Naive thymus-derived CD4-positive, alpha-beta T cell (primary cell): ENCODE measurements at regions of chr15 and their contacts with region 1.

Region 1: GRCh38 chr15:101014921-101015841 is 96.0 kb downstream of the LRRK1 start:
- DNase-seq: peak; percentile 19 to 77 (median 48)
- ATAC-seq: peak; percentile 53
- H3K4me3 ChIP-seq: no peak overlapping the region
- H3K4me3 Mint-ChIP-seq: no peak overlapping the region
- H3K27ac ChIP-seq: no peak overlapping the region
- H3K27ac Mint-ChIP-seq: no peak overlapping the region
- H3K4me1 ChIP-seq: no peaks in the 10 kb centered on the region
- H3K4me1 Mint-ChIP-seq: peaks cover 0 to 3% (median 0%) of the 10 kb centered on the region in 7 donors
- H3K27me3 ChIP-seq: no peaks in the 10 kb centered on the region
- H3K27me3 Mint-ChIP-seq: peaks cover 0 to 3% (median 0%) of the 10 kb centered on the region in 5 donors

Region 2: DNA sequence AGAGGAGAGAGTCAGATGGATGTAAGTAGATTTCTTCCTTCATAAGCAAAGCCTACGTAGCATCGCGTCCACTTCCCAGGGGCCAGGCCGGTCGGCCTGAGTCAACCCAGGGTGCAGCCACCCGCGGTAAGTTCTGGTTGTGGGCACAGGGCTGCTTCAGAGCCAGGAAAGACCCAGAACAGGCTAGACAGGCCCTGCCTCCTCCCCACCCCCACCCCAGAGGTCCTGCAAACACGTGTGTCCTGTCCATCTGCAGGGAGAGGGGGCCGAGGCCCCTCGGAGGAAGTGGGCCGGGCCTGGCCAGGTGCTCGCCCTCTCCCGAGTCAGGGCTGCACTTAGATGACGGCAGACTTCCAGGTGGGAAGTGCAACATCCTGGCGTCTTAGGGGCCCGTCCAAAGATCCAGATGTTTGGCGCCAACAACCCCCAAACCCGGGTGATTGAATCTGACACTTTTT is 236.3 kb before region 1 on chr15:
- CTCF ChIA-PET with region 1: no interaction called
- POLR2A ChIA-PET with region 1: no interaction called
- intact Hi-C with region 1: no loop called
- DNase-seq: peak in 1 of 9 donors; percentile 4
- ATAC-seq: no peak
- H3K4me3 ChIP-seq: no peak overlapping the region
- H3K4me3 Mint-ChIP-seq: no peak overlapping the region
- H3K27ac ChIP-seq: no peak overlapping the region
- H3K27ac Mint-ChIP-seq: no peak overlapping the region
- H3K4me1 ChIP-seq: no peaks in the 10 kb centered on the region
- H3K4me1 Mint-ChIP-seq: no peaks in the 10 kb centered on the region
- H3K27me3 ChIP-seq: no peaks in the 10 kb centered on the region
- H3K27me3 Mint-ChIP-seq: peaks cover 3 to 22% (median 13%) of the 10 kb centered on the region in 5 donors

Region 3: DNA sequence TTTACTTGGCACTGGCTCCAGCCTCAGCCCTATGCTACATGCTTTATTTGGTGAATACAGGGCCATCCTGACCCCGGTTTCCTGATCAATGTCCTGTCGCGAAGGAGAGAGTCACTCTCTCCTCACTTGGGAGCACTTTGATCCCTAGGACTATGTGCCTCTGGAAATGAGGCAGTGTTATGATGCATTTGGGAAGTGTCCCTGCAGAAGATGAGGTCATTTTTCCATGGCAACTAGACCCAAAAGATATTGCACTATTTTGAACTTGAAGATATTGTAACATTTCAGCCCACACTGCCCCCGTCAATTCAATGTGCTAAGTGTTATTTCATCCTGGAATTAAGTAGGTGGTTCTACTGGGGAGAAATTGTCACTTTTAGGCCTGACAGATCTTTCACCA is 28.0 kb before region 1 on chr15:
- CTCF ChIA-PET with region 1: no interaction called
- POLR2A ChIA-PET with region 1: no interaction called
- intact Hi-C with region 1: no loop called
- DNase-seq: no peak
- ATAC-seq: no peak
- H3K4me3 ChIP-seq: no peak overlapping the region
- H3K4me3 Mint-ChIP-seq: no peak overlapping the region
- H3K27ac ChIP-seq: no peak overlapping the region
- H3K27ac Mint-ChIP-seq: no peak overlapping the region
- H3K4me1 ChIP-seq: no peaks in the 10 kb centered on the region
- H3K4me1 Mint-ChIP-seq: no peaks in the 10 kb centered on the region
- H3K27me3 ChIP-seq: no peaks in the 10 kb centered on the region
- H3K27me3 Mint-ChIP-seq: peaks cover 12 to 44% (median 16%) of the 10 kb centered on the region in 5 donors

Region 4: DNA sequence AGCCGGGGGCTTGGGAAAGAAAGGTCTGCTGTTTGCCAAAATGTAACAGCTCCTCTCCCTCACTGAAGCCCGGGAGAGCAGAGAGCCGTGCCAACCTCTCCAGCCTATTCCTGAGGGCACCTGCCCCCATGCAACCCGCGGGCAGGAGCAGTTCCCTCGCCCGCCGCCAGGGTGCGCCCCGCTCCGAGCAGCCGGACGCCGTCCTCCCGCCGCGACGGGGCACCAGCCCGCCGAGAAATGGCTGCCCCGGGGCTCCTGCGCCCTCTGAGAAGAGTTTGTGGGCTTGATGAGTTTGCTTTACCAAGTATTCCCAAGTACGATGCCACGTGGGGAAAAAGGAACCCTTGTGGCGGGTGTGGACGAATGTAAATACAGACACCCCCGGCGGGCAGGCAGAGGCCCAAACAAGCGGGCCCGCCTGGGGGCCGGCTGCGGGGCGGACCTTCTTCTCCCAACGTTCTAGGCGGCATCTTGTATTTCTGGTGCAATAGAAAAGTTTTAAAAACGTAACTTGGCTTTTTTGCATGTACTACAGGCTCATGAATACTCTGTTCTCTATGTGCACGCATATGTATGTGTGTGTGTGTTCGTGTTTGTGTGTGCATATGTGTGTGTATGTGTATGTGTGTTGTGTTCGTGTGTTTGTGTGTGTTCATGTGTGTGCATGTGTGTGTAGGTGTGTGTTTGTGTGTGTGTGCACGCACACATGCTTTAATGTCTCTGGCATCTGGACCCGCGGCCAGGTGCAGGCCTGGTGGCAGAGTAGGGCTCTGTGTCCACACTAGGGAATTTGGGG is 73.8 kb after region 1 on chr15:
- CTCF ChIA-PET with region 1: interaction called, 4 read pairs
- POLR2A ChIA-PET with region 1: no interaction called
- intact Hi-C with region 1: loop called in 1 of 2 experiments (anchors 2 kb)
- DNase-seq: peak; percentile 45 to 89 (median 74)
- ATAC-seq: peak; percentile 92
- H3K4me3 ChIP-seq: no peak overlapping the region
- H3K4me3 Mint-ChIP-seq: peak overlapping the region in 2 of 10 donors; percentile 13 to 24
- H3K27ac ChIP-seq: no peak overlapping the region
- H3K27ac Mint-ChIP-seq: peak overlapping the region in 1 of 9 donors; percentile 49
- H3K4me1 ChIP-seq: no peaks in the 10 kb centered on the region
- H3K4me1 Mint-ChIP-seq: peaks cover 0 to 13% (median 0%) of the 10 kb centered on the region in 7 donors
- H3K27me3 ChIP-seq: no peaks in the 10 kb centered on the region
- H3K27me3 Mint-ChIP-seq: peaks cover 0 to 10% (median 4%) of the 10 kb centered on the region in 5 donors